Naive thymus-derived CD4-positive, alpha-beta T cell (primary cell): ENCODE measurements at regions of chr11 and their contacts with region 1.

Region 1: DNA sequence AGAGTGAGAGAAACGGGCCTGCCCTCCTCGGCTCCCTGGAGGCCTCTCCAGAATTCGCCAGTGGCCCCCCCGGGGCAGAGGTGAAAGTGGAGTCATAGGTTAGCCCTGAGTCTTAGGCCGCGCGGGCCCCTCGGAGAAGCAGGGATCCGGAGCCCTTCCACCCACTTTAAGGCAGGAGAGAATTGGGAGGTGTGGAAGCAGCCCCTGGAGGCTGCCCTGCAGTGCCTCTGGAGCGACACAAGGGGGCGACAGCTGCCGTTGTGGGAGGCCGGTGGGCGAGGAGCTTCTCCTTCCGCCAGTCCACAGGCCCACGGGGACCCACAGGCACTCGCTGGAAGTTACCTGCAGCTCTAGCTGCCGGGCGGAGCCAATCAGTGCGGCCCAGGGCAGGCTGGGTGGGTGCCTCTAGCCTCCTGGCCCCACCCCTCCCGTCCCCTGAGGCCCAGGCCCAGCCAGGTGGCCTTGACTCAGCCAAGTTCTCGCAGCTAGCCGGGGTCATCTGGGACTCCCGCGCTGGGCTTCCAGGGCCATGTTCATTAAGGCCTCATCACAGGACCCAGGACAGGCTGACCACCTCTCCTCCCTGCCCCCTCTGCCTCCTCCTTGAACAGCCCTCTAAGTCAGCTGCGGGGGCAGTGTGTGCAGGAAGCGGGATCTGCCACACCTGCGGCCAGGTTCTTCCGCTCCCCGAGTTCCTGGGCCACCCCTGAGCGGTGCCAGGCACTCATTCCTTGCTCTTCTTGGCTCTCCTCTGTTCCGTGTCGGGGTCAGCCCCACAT is 5.0 kb downstream of the DGKZ start:
- DNase-seq: peak; percentile 66 to 83 (median 77)
- ATAC-seq: peak; percentile 68
- H3K4me3 ChIP-seq: peak overlapping the region; percentile 59
- H3K4me3 Mint-ChIP-seq: peak overlapping the region; percentile 81 to 97 (median 86)
- H3K27ac ChIP-seq: peak overlapping the region; percentile 74
- H3K27ac Mint-ChIP-seq: peak overlapping the region; percentile 66 to 97 (median 91)
- H3K4me1 ChIP-seq: peaks cover 60 to 69% of the 10 kb centered on the region in 2 donors
- H3K4me1 Mint-ChIP-seq: peaks cover 59 to 82% (median 72%) of the 10 kb centered on the region in 7 donors
- H3K27me3 ChIP-seq: no peaks in the 10 kb centered on the region
- H3K27me3 Mint-ChIP-seq: no peaks in the 10 kb centered on the region

Region 2: DNA sequence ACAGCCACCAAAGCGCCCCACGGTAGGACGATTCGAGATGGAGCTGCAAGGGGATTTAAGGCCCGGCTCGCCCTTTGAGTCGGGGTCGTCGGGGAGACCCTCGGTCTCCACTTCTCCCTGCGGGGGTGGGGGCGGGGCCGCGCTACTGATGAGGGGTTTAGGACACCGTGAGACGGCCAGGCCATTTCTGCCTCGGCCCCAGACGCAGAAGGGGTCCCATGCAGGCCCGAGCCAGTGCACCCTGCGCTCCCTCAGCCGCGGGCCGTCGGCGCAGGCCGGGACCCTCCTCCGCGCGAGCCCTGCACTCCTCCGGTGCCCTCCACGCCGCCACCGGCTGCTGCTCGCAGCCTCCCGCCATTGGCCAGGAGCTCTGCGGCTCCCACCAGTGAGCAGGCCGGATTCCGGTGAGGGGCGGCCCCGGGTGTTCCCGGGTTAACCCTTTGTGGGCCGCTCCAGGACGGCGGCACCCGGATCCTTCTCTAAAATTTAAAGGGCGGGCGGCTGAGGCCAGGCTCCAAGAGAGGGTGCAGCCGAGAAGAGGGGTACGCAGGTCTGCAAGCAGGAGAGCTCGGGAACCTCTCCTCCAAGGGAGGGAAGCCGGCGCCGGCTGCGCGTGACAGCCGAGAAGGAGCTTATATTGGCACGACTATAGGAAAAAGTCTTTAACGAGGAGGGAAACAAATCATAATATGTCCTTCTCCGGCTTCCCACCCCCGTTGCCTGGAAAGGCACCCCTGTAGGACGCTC is 56.8 kb before region 1 on chr11:
- CTCF ChIA-PET with region 1: interaction called, 3 read pairs
- POLR2A ChIA-PET with region 1: no interaction called
- intact Hi-C with region 1: loop called in 1 of 2 experiments (anchors 1 kb)
- DNase-seq: peak; percentile 65 to 82 (median 80)
- ATAC-seq: peak; percentile 98
- H3K4me3 ChIP-seq: peak overlapping the region; percentile 78
- H3K4me3 Mint-ChIP-seq: peak overlapping the region; percentile 83 to 92 (median 86)
- H3K27ac ChIP-seq: peak overlapping the region; percentile 34
- H3K27ac Mint-ChIP-seq: peak overlapping the region in 3 of 9 donors; percentile 32 to 48 (median 38)
- H3K4me1 ChIP-seq: peaks cover 5 to 7% of the 10 kb centered on the region in 2 donors
- H3K4me1 Mint-ChIP-seq: peaks cover 0 to 15% (median 7%) of the 10 kb centered on the region in 7 donors
- H3K27me3 ChIP-seq: peaks cover 5 to 6% of the 10 kb centered on the region in 2 donors
- H3K27me3 Mint-ChIP-seq: peaks cover 0 to 35% (median 5%) of the 10 kb centered on the region in 5 donors

Region 3: DNA sequence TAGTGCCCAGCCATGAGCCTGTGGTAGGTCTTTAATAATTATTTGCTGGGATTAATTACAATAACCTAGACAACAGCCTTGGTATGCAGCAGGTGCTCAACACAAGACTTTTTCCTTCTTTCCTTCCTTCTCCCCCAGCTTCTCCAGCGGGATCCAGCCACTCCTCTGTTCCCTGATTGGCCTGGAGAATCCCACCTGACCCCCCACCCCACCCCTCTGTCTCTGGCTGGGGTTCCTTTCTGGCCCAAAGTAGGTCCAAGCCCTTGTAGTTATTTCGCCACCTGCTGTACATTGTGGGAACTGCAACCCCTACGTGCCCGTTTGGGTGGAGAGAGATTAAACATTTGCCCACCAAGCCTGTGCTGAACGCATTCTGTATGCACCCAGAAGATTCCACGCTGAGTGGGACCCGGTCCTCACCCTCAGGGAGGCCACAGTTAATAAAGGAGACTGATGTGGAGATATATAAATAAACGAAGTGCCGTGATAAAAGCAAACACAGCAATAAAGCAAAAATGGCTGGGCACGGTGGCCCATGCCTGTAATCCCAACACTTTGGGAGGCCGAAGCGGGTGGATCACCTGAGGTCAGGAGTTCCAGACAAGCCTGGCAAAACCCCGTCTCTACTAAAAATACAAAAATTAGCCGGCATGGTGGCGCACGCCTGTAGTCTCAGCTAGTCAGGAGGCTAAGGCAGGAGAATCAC is 37.1 kb before region 1 on chr11:
- CTCF ChIA-PET with region 1: interaction called, 22 read pairs
- POLR2A ChIA-PET with region 1: interaction called, 6 read pairs
- intact Hi-C with region 1: loop called in 1 of 2 experiments (anchors 1 kb)
- DNase-seq: peak; percentile 42 to 76 (median 60)
- ATAC-seq: peak; percentile 88
- H3K4me3 ChIP-seq: no peak overlapping the region
- H3K4me3 Mint-ChIP-seq: peak overlapping the region in 2 of 10 donors; percentile 9 to 40
- H3K27ac ChIP-seq: no peak overlapping the region
- H3K27ac Mint-ChIP-seq: peak overlapping the region in 2 of 9 donors; percentile 2 to 63
- H3K4me1 ChIP-seq: peaks cover 6 to 16% of the 10 kb centered on the region in 2 donors
- H3K4me1 Mint-ChIP-seq: peaks cover 22 to 35% (median 24%) of the 10 kb centered on the region in 7 donors
- H3K27me3 ChIP-seq: no peaks in the 10 kb centered on the region
- H3K27me3 Mint-ChIP-seq: no peaks in the 10 kb centered on the region

Region 4: DNA sequence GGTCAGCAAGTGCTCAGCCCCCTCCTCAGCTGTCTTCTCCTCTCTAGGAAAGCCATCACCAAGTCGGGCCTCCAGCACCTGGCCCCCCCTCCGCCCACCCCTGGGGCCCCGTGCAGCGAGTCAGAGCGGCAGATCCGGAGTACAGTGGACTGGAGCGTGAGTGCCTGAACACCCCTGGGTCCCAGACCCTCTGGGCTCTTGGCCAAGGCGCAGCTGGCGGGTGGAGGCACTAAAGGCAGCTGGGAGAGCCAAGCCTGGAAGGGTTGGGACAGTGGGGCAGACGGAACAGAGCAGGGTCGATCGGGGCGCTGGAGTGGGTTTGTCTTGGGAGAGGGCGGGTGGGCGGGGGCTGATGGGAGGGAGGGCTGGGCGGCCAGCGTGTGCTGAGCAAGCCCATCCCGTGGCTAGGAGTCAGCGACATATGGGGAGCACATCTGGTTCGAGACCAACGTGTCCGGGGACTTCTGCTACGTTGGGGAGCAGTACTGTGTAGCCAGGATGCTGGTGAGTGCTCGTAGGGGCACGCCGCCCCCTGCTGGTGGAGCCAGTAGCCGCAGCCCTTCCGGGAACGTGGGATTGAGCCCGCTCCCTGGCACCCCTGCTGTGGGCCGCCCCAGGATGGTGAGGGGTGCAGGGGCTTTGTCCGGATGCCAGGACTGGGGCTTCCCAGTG is 15.1 kb after region 1 on chr11:
- CTCF ChIA-PET with region 1: interaction called, 302 read pairs
- POLR2A ChIA-PET with region 1: interaction called, 226 read pairs
- intact Hi-C with region 1: loop called (anchors 1 kb)
- DNase-seq: peak; percentile 65 to 84 (median 77)
- ATAC-seq: peak; percentile 86
- H3K4me3 ChIP-seq: no peak overlapping the region
- H3K4me3 Mint-ChIP-seq: peak overlapping the region in 5 of 10 donors; percentile 21 to 50 (median 45)
- H3K27ac ChIP-seq: peak overlapping the region; percentile 30
- H3K27ac Mint-ChIP-seq: peak overlapping the region in 5 of 9 donors; percentile 17 to 83 (median 63)
- H3K4me1 ChIP-seq: peaks cover 6 to 25% of the 10 kb centered on the region in 2 donors
- H3K4me1 Mint-ChIP-seq: peaks cover 20 to 52% (median 38%) of the 10 kb centered on the region in 7 donors
- H3K27me3 ChIP-seq: no peaks in the 10 kb centered on the region
- H3K27me3 Mint-ChIP-seq: no peaks in the 10 kb centered on the region

Region 5: DNA sequence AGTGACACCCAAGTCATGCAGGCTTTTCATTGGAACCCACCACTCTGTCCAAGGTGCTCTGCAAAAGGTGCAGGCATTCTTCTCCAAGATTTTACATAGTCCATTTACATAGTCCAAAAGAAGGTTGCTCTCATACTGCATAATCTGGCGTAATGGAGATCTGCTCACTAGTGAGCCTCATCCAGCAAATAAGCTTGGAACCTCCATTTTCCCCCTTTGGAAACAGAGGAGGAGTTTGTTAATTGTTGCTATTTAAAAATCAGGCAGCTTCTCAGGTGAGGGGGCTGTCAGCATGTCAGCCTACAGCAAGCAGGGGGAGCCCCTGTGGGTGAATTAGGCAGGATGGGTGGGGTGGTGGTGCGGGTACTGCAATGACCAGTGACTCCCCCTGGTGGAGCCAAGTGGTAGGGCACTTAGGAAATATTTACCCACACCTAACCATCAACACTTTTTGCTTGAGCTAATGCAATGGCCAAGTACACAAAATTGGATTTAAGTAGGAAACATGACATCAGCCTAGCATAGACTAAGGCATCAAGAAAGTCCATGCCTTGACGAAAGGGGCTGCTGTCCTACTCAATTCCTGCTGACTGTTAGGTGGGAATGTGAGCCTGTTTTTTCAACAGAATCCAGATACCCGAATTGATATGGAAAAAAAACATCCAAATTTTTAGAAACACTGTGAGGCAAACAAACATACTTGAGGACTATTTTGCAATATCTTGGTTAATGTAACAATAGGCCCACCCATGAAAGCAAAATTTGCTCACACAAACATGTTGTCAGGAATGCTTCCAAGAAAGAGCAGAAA is 177.0 kb after region 1 on chr11:
- CTCF ChIA-PET with region 1: no interaction called
- POLR2A ChIA-PET with region 1: interaction called, 3 read pairs
- intact Hi-C with region 1: loop called in 1 of 2 experiments (anchors 2 kb)
- DNase-seq: peak; percentile 39 to 75 (median 68)
- ATAC-seq: peak; percentile 99
- H3K4me3 ChIP-seq: no peak overlapping the region
- H3K4me3 Mint-ChIP-seq: no peak overlapping the region
- H3K27ac ChIP-seq: no peak overlapping the region
- H3K27ac Mint-ChIP-seq: peak overlapping the region in 1 of 9 donors; percentile 65
- H3K4me1 ChIP-seq: peaks cover 0 to 8% of the 10 kb centered on the region in 2 donors
- H3K4me1 Mint-ChIP-seq: peaks cover 17 to 49% (median 38%) of the 10 kb centered on the region in 7 donors
- H3K27me3 ChIP-seq: no peaks in the 10 kb centered on the region
- H3K27me3 Mint-ChIP-seq: no peaks in the 10 kb centered on the region